AG04450 (cell line): ENCODE measurements at regions of chr2 and their contacts with region 1.

Region 1: GRCh38 chr2:18741895-18742732 is 152.7 kb upstream of the NT5C1B start:
- DNase-seq: peak; percentile 90
- H3K4me3 ChIP-seq: no peak overlapping the region
- H3K27ac ChIP-seq: no peak overlapping the region
- H3K27me3 ChIP-seq: no peaks in the 10 kb centered on the region
- CTCF ChIP-seq: peak; percentile 38

Region 2: GRCh38 chr2:18684206-18685038 is 57.7 kb before region 1 on chr2:
- CTCF ChIA-PET with region 1: no interaction called
- POLR2A ChIA-PET with region 1: interaction called, 11 read pairs
- DNase-seq: peak; percentile 45
- H3K4me3 ChIP-seq: no peak overlapping the region
- H3K27ac ChIP-seq: no peak overlapping the region
- H3K27me3 ChIP-seq: peaks cover 3% of the 10 kb centered on the region
- CTCF ChIP-seq: no peak

Region 3: GRCh38 chr2:18987592-18988073 is 245.5 kb after region 1 on chr2:
- CTCF ChIA-PET with region 1: no interaction called
- POLR2A ChIA-PET with region 1: no interaction called
- DNase-seq: peak; percentile 85
- H3K4me3 ChIP-seq: no peak overlapping the region
- H3K27ac ChIP-seq: no peak overlapping the region
- H3K27me3 ChIP-seq: no peaks in the 10 kb centered on the region
- CTCF ChIP-seq: peak; percentile 23; the same call in 1 of the 2 replicates